Activated CD8-positive, alpha-beta T cell treated with anti-CD3 and anti-CD28 coated beads, Interleukin-2, amount 10 ng/mL, durations not matched to agents 7 days and 5 days (primary cell): ENCODE measurements at regions of chr14 and their contacts with region 1.

Region 1: DNA sequence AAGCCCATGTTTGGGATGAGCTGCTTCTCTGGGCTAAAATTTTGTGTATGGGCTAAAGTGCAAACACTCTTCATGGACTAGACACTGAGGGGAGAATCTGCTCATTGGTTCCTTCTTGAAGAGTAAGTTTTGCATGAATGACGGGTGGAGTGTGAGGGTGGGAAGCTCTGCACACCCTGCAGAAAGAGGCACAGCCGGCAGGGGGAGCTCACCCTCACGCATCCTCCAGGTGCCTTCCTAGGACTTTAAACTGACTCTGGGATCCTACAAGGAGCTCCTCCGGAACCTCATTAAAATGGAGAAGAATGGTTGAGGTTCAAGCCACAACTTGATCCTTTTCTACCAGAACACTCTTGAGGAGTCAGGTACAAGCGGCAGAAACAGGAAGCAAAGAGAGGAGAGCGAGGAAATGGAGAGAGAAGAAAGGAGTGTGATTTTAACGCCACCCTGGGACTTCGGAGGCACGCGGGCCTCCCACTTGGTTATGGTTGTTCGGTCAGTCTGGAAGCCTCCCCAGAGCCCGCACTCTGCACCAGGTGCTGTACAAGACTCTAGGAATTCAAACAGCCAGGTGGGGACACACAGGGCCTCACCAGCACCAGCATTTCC is 87.5 kb downstream of the SETD3 start:
- DNase-seq: peak; percentile 45
- ATAC-seq: peak; percentile 56
- H3K4me3 Mint-ChIP-seq: no peak overlapping the region
- H3K27ac Mint-ChIP-seq: no peak overlapping the region
- H3K4me1 Mint-ChIP-seq: peaks cover 11% of the 10 kb centered on the region
- H3K27me3 Mint-ChIP-seq: no peaks in the 10 kb centered on the region

Region 2: GRCh38 chr14:99382781-99383451 is 10.2 kb before region 1 on chr14:
- CTCF ChIA-PET with region 1: interaction called, 23 read pairs
- POLR2A ChIA-PET with region 1: no interaction called
- DNase-seq: no peak
- ATAC-seq: no peak
- H3K4me3 Mint-ChIP-seq: no peak overlapping the region
- H3K27ac Mint-ChIP-seq: no peak overlapping the region
- H3K4me1 Mint-ChIP-seq: peaks cover 7% of the 10 kb centered on the region
- H3K27me3 Mint-ChIP-seq: peaks cover 10% of the 10 kb centered on the region

Region 3: DNA sequence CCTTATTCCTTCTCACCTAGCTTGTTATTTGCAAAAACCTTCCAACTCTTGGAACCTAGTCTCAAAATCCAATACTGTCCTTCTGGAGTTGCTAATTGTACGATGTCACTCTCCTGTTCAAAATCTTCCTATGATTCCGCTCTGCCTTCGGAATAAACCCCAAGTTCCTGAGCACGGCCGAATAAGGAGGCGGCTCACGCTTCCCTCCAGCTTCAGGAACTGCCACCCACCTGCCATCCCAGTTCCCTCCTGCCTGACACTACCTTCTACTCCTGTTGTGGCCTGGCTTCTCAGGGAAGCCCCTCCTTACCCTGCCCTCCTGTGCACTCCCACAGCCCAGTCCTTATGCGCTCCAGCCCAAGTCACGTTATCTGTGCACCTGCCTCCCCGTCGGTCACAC is 14.3 kb after region 1 on chr14:
- CTCF ChIA-PET with region 1: interaction called, 36 read pairs
- POLR2A ChIA-PET with region 1: interaction called, 3 read pairs
- DNase-seq: no peak
- ATAC-seq: no peak
- H3K4me3 Mint-ChIP-seq: no peak overlapping the region
- H3K27ac Mint-ChIP-seq: peak overlapping the region; percentile 3
- H3K4me1 Mint-ChIP-seq: peaks cover 9% of the 10 kb centered on the region
- H3K27me3 Mint-ChIP-seq: no peaks in the 10 kb centered on the region